ENCODE measurements at regions of chr4 and their contacts with region 1.

Region 1: DNA sequence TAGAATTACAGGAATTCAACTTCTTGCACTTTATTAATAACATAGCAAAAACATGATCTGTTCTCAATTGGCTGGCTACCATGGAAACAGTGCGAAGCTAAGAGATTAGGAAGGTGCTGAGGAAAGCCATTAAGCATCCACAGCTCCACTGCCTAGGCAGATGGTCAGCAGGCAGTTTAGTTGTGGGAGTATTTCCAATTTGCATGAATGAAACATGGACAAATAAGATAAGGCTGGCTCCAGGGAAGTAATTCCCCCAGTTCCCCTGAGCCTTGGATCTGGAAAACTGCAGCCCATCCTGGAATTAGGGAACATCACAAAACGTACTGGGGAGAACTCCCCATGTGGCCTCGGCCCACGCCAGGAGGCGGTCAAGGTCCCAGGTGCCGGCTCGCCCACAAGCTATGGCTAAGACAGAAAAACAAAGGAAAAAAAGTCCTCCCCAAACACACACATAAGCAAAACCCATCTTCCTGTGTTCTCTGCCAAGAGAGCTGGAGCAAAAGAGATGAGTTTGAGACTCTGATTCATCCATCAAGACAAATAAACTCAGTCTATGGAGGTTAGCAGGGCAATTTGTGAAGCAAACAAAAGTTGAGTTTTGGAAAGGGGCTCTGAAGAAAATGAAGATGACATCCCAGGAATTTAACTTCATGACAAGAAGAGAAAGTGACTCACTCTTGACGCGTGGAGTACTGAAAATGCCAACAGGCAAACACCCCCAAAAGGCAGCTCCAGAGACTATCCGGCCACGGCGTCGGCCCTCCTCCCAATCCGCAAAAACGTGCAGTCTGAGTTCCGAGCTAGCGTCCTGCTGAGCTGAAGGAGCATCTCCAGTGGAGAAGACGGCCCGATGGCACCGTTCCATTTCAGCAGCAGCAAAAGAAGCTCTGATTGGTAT is 45.1 kb downstream of the IGFBP7 start:
- DNase-seq: peak; percentile 71 to 85
- ATAC-seq: peak; percentile 79
- H3K4me3 ChIP-seq: no peak overlapping the region
- H3K27ac ChIP-seq: peak overlapping the region; percentile 65 to 81
- H3K4me1 ChIP-seq: peaks cover 2 to 18% of the 10 kb centered on the region in 2 donors
- H3K27me3 ChIP-seq: no peaks in the 10 kb centered on the region

Region 2: DNA sequence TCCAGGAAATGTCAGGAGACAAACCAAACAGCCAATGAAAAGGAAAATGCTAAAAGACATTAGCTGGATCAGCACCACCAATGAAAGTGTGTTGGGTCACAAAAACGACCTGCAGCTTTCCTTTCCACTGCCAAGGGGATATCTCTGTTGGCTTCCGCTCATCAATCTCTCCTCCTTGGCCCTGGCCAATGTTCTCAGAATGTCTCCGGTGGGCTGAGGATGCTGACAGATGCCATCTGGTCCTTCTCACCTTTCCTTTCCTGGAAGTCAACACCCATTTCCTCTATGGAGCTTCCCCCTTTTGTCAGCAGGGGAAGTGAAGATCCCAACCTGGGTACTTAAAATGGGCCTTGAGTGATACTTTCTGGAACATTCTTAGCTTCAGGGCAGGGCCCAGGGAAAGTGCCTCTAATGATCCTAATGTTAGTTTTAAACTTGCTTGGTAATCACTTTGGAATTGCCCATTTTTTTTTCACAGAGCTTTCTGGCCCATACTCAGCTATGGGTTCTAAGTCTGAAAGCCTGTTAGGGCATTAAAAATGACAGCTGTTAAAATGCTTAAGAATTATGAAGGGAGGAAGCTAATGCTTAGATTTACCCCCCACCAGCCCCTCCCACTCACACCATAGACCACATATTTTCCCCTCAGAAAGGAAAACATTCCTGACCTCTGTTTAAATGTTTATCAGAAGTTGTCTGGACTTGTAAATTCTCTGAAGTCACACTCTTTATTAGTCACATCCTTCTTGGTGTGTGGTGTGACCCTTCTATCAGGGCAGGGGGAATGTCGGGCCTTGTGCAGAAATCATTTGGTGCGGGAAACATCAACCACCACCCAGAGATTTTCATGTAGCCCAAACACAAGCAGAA is 16.0 kb after region 1 on chr4:
- intact Hi-C with region 1: loop called in 1 of 2 experiments (anchors 2 kb)
- DNase-seq: peak; percentile 76 to 78
- ATAC-seq: peak; percentile 68
- H3K4me3 ChIP-seq: no peak overlapping the region
- H3K27ac ChIP-seq: peak overlapping the region; percentile 99 to 100
- H3K4me1 ChIP-seq: peaks cover 2 to 16% of the 10 kb centered on the region in 2 donors
- H3K27me3 ChIP-seq: no peaks in the 10 kb centered on the region

Measured in aorta (tissue), 5 donors.